Natural killer cell (primary cell): ENCODE measurements at regions of chr18 and their contacts with region 1.

Region 1: DNA sequence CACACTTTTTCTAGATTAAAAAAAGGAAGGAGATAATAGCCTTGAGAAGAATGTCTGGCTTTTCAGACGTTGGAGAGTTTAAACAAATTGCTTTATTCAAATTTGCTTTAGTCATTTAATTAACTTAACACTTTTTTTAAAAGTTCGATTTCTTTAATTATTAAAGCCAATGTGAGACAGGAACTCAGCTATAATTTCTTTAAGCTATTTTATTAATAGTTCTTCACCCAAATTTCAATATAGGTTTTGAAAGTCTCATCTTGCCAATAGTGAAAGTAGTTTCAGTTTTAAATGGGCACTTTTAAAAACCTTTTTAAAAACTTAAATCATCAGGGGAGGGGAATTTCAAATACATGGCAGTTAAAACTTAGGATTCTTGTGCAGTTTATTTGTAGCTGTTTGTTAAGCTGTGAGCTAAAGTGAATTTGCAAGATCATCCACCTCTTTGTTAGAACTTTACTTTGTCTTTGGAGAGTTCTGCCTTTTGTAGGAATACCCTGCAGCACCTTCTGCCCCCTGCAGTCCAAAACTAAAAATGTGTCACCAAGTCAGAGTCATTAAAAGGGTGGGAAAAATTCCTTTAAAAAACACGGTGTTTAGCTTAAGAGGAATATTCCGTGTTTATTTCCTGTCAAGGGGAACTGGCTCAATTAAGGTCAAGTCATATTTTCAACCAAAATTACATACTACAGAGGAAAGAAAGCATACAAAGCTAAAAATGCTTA is 4.6 kb downstream of the TGIF1 start:
- DNase-seq: peak in 1 of 2 donors; percentile 78
- ATAC-seq: peak in 2 of 3 donors; percentile 22 to 30
- H3K4me3 ChIP-seq: peak overlapping the region; percentile 38
- H3K4me3 Mint-ChIP-seq: peak overlapping the region; percentile 97
- H3K27ac ChIP-seq: peak overlapping the region; percentile 97
- H3K27ac Mint-ChIP-seq: peak overlapping the region; percentile 99 to 100
- H3K4me1 ChIP-seq: peaks cover 42% of the 10 kb centered on the region
- H3K4me1 Mint-ChIP-seq: peaks cover 44 to 49% of the 10 kb centered on the region in 2 donors
- H3K27me3 ChIP-seq: no peaks in the 10 kb centered on the region
- H3K27me3 Mint-ChIP-seq: no peaks in the 10 kb centered on the region
- CTCF ChIP-seq: peak; percentile 73

Region 2: GRCh38 chr18:3380384-3380961 is 74.1 kb before region 1 on chr18:
- intact Hi-C with region 1: loop called (anchors 2 kb)
- DNase-seq: peak in 1 of 2 donors; percentile 58
- ATAC-seq: peak; percentile 32 to 53 (median 40)
- H3K4me3 ChIP-seq: no peak overlapping the region
- H3K4me3 Mint-ChIP-seq: no peak overlapping the region
- H3K27ac ChIP-seq: no peak overlapping the region
- H3K27ac Mint-ChIP-seq: no peak overlapping the region
- H3K4me1 ChIP-seq: no peaks in the 10 kb centered on the region
- H3K4me1 Mint-ChIP-seq: no peaks in the 10 kb centered on the region
- H3K27me3 ChIP-seq: peaks cover 3% of the 10 kb centered on the region
- H3K27me3 Mint-ChIP-seq: peaks cover 8 to 16% of the 10 kb centered on the region in 2 donors
- CTCF ChIP-seq: no peak

Region 3: DNA sequence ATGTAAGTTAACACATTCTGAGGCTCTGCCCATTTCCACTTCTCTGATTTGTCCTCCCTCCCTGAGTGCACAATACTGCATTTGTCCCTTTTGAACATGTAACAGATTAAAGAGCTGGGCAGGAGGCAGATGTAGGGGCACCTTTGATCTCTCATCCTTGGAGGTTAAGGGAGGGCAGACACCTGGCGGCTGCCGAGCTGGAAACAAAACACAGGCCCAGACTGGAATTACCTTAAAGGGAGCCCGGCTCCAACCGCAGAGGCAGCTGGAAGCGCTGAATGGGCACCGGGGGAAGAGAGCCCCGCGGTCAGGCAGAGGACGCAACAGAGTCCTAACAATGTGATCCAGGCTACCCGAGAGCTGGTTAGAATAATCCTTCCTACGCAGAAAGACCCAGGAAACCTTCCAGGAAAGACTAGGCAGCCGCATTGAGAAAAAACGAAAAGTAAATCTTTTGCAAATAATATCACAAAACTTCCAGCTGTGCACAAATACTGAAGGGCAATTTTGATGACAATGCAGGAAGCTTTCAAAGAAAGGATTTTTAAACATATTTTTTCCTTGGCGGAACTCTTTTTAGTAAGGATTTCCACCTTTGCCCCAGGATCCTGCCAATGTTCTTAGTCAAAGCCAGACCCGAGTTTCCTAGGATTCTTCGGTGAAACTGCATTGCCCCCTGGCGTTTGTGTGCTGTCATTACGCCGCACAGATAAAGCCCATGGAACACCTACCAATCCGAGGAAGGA is 211.4 kb after region 1 on chr18:
- intact Hi-C with region 1: loop called (anchors 1 kb)
- DNase-seq: peak; percentile 68 to 88
- ATAC-seq: peak; percentile 81 to 94 (median 88)
- H3K4me3 ChIP-seq: no peak overlapping the region
- H3K4me3 Mint-ChIP-seq: peak overlapping the region; percentile 49
- H3K27ac ChIP-seq: no peak overlapping the region
- H3K27ac Mint-ChIP-seq: no peak overlapping the region
- H3K4me1 ChIP-seq: peaks cover 8% of the 10 kb centered on the region
- H3K4me1 Mint-ChIP-seq: peaks cover 3 to 5% of the 10 kb centered on the region in 2 donors
- H3K27me3 ChIP-seq: peaks cover 2% of the 10 kb centered on the region
- H3K27me3 Mint-ChIP-seq: peaks cover 0 to 8% of the 10 kb centered on the region in 2 donors
- CTCF ChIP-seq: peak; percentile 96